Activated CD4-positive, alpha-beta T cell treated with anti-CD3 and anti-CD28 coated beads for 36 hours (primary cell): ENCODE measurements at regions of chr18 and their contacts with region 1.

Region 1: DNA sequence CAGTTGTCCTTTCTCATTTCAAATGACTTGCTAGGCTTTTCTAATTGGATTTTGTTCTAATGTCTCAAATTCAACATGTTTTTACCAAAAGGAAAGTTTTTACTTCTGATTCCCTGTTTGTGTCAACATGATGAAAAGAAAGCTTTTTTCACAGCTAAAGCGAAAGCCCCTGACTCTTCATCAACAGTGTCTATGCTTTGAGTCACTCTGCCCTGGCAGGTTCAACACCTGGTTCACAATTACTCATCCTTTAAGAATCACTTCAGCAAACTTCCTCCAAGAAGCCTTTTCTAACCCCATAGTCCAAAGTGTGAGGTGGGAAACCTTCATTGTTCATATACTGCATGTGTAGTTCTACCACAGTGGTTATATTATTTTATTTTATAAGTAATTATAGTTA is 7.6 kb upstream of the DSG2 start:
- DNase-seq: peak; percentile 33
- ATAC-seq: peak; percentile 95
- H3K4me3 Mint-ChIP-seq: no peak overlapping the region
- H3K27ac Mint-ChIP-seq: no peak overlapping the region
- H3K4me1 Mint-ChIP-seq: peaks cover 9% of the 10 kb centered on the region
- H3K27me3 Mint-ChIP-seq: peaks cover 15% of the 10 kb centered on the region

Region 2: GRCh38 chr18:31658670-31659575 is 168.5 kb after region 1 on chr18:
- CTCF ChIA-PET with region 1: no interaction called
- POLR2A ChIA-PET with region 1: no interaction called
- intact Hi-C with region 1: loop called in 1 of 2 experiments (anchors 2 kb)
- DNase-seq: peak; percentile 34
- ATAC-seq: peak; percentile 90
- H3K4me3 Mint-ChIP-seq: no peak overlapping the region
- H3K27ac Mint-ChIP-seq: peak overlapping the region; percentile 73
- H3K4me1 Mint-ChIP-seq: peaks cover 22% of the 10 kb centered on the region
- H3K27me3 Mint-ChIP-seq: peaks cover 2% of the 10 kb centered on the region

Region 3: DNA sequence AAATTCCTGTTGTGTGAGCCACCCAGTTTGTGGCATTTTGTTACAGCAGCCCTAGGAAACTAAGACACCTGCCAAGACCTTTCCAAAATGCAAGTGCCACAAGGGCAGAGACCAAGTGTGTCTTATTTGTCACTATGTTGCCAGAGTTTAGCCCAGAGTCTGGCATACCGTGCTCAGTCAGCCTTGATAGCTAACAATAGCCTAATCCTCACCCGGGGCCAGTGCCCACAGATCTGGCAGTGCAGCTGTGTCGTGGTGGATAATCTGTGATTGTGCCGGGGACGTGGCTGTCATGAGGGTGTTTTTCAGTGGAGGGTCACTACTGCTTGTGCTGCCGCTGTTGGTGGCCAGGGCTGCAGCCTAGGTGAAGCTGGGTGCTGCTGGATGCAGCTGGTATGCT is 753.0 kb after region 1 on chr18:
- CTCF ChIA-PET with region 1: no interaction called
- POLR2A ChIA-PET with region 1: no interaction called
- intact Hi-C with region 1: no loop called
- DNase-seq: no peak
- ATAC-seq: no peak
- H3K4me3 Mint-ChIP-seq: no peak overlapping the region
- H3K27ac Mint-ChIP-seq: no peak overlapping the region
- H3K4me1 Mint-ChIP-seq: no peaks in the 10 kb centered on the region
- H3K27me3 Mint-ChIP-seq: peaks cover 9% of the 10 kb centered on the region